Right ventricle myocardium inferior (tissue), 1 donor: ENCODE measurements at regions of chr6 and their contacts with region 1.

Region 1: GRCh38 chr6:117976030-117976651 is 69.1 kb downstream of the SLC35F1 start:
- DNase-seq: no peak
- ATAC-seq: no peak

Region 2: DNA sequence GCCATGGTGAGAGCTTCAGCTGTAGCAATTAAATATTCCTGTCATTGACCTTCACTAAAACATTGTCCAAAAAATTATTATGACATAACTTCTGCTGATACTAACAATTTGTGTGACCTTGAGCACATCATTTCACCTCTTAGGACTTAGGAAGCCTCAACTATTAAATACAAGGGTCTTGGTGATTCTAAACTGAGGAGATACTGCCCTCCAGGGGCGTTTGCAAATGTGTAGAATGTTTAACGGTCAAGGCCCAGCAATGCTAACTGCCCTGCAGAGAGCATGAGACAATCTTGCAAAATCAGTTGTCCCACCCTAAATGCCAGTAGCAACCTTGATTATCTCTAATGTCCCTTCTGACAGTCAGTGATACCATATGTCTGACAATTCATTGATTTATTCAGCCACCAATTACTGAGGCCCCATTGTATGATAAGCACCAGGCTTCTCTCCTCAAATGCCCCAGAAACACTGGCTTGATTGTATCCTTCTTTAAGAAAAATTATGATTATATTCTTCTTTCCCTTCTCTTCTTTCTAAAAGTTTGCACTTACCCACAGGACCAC is 287.9 kb after region 1 on chr6:
- intact Hi-C with region 1: loop called (anchors 2 kb)
- DNase-seq: no peak
- ATAC-seq: peak; percentile 46

Region 3: DNA sequence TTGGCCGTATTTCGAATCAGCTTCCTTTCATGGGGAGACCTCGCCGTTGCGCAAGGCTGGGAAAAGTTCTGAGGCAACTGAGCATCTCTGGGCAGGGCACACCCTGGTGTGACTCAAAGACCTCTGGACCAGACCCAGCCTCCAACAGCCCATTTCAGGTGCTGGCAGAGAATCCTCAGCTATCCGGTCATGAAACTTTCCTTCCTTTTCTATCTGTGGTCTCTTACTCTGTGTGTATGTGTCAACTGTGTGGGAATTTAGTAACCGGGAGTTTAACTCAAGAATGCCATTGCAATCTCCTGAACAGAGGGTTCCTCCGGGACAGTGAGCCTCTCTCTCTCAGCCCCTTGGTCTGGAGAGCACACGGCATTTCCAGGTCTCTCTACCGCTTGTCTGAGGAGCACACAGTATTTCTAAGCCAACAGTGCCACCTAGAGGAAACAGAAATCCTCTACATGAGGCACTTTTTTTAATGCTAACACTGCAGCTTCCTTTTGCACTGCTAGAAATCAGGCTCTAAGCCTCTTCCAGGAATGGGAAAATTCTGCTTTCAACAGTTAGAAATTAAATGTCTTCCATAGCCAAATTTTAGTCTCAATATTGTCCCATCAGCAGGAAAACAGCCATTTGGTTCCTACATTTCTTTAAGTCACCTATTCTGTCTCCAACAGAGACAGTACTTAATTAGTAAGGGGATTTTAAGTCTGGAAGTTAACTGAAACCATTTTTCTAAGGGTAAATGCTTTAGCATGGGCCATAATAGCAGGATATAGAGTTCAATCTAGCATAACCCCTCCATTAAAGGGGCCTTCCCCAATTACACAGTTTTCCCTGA is 604.7 kb after region 1 on chr6:
- intact Hi-C with region 1: loop called (anchors 10 kb)
- DNase-seq: no peak
- ATAC-seq: peak; percentile 88